Sigmoid colon (tissue), 7 donors: ENCODE measurements at regions of chr1 and their contacts with region 1.

Region 1: GRCh38 chr1:244047621-244048471 is 3.2 kb upstream of the ZBTB18 start:
- DNase-seq: peak; percentile 100
- H3K4me3 ChIP-seq: peak overlapping the region; percentile 76 to 90 (median 84)
- H3K27ac ChIP-seq: peak overlapping the region; percentile 95 to 98 (median 96)
- H3K4me1 ChIP-seq: peaks cover 0 to 40% (median 25%) of the 10 kb centered on the region in 4 donors
- H3K27me3 ChIP-seq: no peaks in the 10 kb centered on the region
- CTCF ChIP-seq: no peak
- EP300 ChIP-seq: no peak
- POLR2A ChIP-seq: peak; percentile 96 to 98

Region 2: GRCh38 chr1:243343970-243344937 is 703.6 kb before region 1 on chr1:
- intact Hi-C with region 1: loop called (anchors 10 kb)
- DNase-seq: no peak
- H3K4me3 ChIP-seq: no peak overlapping the region
- H3K27ac ChIP-seq: no peak overlapping the region
- H3K4me1 ChIP-seq: peaks cover 0 to 4% (median 0%) of the 10 kb centered on the region in 4 donors
- H3K27me3 ChIP-seq: no peaks in the 10 kb centered on the region
- CTCF ChIP-seq: peak; percentile 24 to 73 (median 64)
- EP300 ChIP-seq: no peak
- POLR2A ChIP-seq: no peak

Region 3: DNA sequence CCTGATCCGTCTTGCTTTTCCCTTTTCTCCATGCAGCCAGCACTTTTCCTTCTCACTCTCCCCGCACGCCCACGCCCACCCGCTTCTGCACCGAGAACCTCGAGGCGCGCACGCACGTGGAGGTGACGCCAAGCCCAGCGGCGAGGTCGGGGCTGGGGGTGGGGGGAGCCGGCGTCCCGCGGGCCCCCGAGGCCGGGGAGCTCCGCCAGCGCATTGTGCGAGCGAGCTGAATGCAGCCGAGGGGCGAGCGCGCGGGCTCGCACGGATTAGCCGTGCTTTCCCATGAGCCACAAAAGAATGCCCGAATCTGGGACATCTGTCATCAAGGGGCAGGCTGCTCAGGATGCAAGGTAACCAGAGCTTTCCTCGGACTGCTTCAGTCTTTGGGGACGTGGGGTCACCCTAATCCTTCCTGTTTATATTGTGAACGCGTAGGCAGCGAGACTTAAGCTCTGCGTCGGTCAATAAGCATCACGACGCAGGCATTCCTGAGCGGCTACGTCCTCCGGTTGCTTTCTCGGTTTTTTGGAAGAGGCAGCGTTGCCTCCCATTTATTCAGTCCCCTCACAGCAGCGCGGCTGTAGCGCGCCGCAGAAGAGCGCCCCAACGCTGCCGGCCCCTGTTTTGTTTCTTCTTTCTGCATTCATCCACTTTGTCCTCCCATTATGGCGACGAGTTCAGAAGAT is 130.5 kb before region 1 on chr1:
- intact Hi-C with region 1: loop called (anchors 5 kb)
- DNase-seq: peak; percentile 71
- H3K4me3 ChIP-seq: peak overlapping the region; percentile 26 to 55 (median 42)
- H3K27ac ChIP-seq: peak overlapping the region in 3 of 4 donors; percentile 18 to 51 (median 48)
- H3K4me1 ChIP-seq: peaks cover 0 to 15% (median 9%) of the 10 kb centered on the region in 4 donors
- H3K27me3 ChIP-seq: peaks cover 0 to 16% (median 4%) of the 10 kb centered on the region in 3 donors
- CTCF ChIP-seq: no peak
- EP300 ChIP-seq: no peak
- POLR2A ChIP-seq: no peak

Region 4: GRCh38 chr1:244214009-244214967 is 166.4 kb after region 1 on chr1:
- intact Hi-C with region 1: loop called (anchors 5 kb)
- DNase-seq: peak; percentile 77
- H3K4me3 ChIP-seq: no peak overlapping the region
- H3K27ac ChIP-seq: peak overlapping the region; percentile 47 to 84 (median 67)
- H3K4me1 ChIP-seq: peaks cover 0 to 22% (median 16%) of the 10 kb centered on the region in 4 donors
- H3K27me3 ChIP-seq: no peaks in the 10 kb centered on the region
- CTCF ChIP-seq: no peak
- EP300 ChIP-seq: peak in 1 of 4 donors; percentile 30
- POLR2A ChIP-seq: no peak

Region 5: GRCh38 chr1:244451951-244452795 is 404.3 kb after region 1 on chr1:
- intact Hi-C with region 1: loop called (anchors 1 kb)
- DNase-seq: peak; percentile 99
- H3K4me3 ChIP-seq: peak overlapping the region; percentile 76 to 94 (median 88)
- H3K27ac ChIP-seq: peak overlapping the region; percentile 93 to 99 (median 97)
- H3K4me1 ChIP-seq: peaks cover 0 to 40% (median 33%) of the 10 kb centered on the region in 4 donors
- H3K27me3 ChIP-seq: no peaks in the 10 kb centered on the region
- CTCF ChIP-seq: peak in 1 of 4 experiments; percentile 39
- EP300 ChIP-seq: no peak
- POLR2A ChIP-seq: no peak